Tibial artery (tissue), 4 donors: ENCODE measurements at regions of chr1 and their contacts with region 1.

Region 1: DNA sequence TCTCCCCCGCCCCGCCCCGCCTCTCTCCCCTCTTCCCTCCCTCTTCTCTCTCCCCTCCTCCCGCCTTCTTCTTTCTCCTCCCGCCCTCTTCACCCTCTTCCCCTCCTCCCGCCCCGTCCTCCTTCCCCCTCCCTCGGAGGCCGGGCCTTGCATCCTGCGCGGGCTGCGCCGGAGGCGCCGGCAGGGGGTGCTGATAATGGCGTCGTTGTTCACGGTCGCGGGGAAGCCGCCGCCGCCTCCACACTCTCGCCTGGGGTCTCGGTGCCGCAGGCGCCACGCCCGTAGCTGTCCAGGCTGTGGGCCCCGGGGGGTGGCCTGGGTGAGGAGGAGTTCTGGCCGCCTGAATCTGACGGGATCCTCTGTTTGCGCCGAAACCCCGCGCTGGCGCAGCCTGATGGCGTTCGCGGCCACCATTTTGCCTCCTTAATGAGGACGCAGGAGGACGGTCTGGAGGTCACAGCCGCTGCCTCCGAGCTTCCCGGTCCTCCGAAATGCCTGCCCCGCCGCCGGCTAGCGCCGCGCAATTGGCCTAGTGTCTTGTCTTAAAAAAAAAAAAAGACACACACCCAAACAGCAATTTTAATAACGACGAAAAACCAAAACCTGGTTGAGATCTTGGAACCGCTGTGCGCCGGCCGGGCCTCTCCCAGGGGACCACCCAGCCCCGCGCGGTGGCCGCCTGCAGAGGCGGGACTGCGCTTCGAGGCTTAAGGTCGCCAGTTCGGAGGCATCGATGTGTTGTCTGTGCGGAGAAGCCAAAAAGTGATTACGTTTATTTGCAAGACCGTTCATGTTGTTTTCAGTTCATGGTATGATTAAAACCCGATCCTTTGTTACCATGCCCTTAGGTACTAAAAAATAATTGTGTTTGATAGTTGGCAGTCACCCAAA is 106.6 kb upstream of the HNRNPU start:
- DNase-seq: peak; percentile 91 to 97
- H3K4me3 ChIP-seq: peak overlapping the region; percentile 70 to 81
- H3K27ac ChIP-seq: peak overlapping the region; percentile 99 to 100
- H3K4me1 ChIP-seq: peaks cover 0 to 17% (median 7%) of the 10 kb centered on the region in 4 donors
- H3K27me3 ChIP-seq: no peaks in the 10 kb centered on the region
- CTCF ChIP-seq: peak; percentile 52 to 74

Region 2: DNA sequence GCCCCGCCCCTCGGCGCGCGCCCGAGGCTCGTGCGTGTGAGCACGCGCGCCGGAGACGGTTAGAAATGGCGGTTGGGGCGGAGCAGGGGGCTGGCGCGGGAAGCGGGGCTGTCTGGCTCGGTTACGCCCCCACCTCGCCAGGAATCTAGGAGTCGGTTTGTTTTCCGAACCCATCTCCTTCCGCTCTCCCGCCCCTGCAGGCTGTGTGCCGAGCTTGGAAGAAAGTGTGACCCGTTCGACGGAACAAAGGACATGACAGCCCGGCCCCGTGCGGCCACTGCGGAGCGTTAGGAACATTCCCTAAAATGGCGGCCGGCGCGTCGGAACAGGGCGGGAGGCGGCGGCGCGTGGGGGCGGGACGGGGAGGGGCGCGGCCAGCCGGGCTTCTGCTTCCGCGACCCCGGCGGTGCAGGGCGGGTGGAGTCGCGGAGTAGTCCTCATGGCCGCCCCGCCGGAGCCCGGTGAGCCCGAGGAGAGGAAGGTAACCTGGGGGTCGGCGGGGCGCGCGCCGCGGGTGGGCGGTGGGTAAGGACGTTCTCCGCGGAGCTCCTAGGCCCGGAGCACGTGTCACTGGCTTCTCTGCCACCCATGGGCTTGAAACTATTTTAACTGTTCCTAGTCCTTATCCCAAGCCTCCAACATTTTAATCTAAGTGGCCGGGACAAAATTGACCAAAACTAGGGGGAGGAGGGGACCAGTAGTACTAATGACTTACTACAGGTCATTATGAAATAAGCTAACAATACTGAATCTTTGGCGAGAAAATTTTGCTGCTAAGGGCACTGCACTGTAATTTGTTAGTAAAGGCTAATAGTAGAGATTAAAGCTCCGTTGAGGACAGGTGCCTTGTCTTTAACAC is 135.4 kb before region 1 on chr1 and contains the start of gene COX20:
- intact Hi-C with region 1: loop called (anchors 2 kb)
- DNase-seq: peak; percentile 86 to 95
- H3K4me3 ChIP-seq: peak within 1 kb of the TSS; percentile 65 to 72
- H3K27ac ChIP-seq: peak within 1 kb of the TSS; percentile 97 to 98
- H3K4me1 ChIP-seq: peaks cover 0 to 46% (median 28%) of the 10 kb centered on the region in 4 donors
- H3K27me3 ChIP-seq: no peaks in the 10 kb centered on the region
- CTCF ChIP-seq: peak; percentile 4 to 6

Region 3: DNA sequence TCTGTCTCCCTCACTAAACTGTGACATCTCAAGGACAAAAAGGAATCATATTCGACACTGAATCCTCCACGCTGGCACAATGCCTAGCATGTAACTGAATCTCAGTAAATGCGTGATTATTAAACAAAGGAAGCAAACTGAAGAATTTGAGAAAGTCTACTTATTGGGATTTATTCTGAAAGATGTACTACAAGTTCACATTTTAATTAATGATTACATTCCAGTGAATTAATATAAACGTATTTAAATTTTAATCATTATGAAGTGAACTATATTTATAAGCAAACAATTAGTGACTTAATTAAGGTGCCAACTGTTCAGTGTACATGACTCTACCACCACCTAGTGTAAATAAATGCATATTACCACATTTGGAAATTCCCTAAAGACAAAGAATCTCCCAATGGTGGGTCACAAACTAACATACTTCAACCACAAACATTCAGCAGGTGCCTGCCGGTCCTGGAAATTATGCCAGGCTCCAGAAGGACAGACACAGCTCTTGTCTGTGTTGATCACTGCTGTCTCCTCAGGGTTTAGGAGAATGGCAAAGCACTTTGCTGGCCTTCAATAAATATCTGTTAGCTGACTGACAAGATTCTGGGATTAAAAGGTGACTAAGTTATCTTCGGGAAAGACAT is 1479.8 kb after region 1 on chr1:
- intact Hi-C with region 1: no loop called
- DNase-seq: no peak
- H3K4me3 ChIP-seq: no peak overlapping the region
- H3K27ac ChIP-seq: no peak overlapping the region
- H3K4me1 ChIP-seq: peaks cover 0 to 15% (median 0%) of the 10 kb centered on the region in 4 donors
- H3K27me3 ChIP-seq: no peaks in the 10 kb centered on the region
- CTCF ChIP-seq: peak; percentile 40 to 48